Gastrocnemius medialis (tissue), 4 donors: ENCODE measurements at regions of chr11 and their contacts with region 1.

Region 1: DNA sequence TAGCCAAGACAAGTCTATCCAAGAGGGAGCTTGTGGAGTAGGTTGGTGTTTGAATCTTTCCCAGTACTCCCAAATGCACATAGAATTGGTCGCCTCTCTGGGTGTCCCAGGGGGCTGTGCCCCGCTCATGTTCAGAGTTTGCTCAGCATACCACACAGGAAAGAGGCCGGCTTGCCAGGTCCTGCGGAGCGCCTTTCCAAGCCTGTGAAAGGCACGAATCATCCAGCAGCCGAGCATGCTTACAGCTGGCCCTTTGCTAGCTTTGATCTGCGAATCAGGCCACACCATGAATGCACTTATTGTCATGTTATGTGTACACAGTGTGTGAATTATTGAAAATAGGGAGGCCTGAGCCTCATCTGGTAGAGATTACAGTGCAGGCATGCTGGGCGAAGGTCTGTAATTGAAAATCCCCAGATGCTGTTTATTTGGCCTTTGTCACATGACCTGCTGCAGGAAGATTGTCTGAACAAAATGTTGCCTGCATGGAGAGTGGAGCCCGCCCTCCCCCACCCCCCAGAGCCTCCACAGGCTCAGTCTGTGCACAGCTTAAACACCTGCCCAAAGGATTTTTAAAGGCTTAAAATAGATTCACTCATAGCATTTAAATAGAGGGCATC is 163.3 kb upstream of the RASSF10 start:
- DNase-seq: peak in 1 of 2 donors; percentile 31
- ATAC-seq: peak; percentile 79 to 80
- H3K4me3 ChIP-seq: peak overlapping the region; percentile 8 to 22 (median 14)
- H3K27ac ChIP-seq: peak overlapping the region; percentile 77 to 93 (median 85)
- H3K4me1 ChIP-seq: peaks cover 75 to 91% of the 10 kb centered on the region in 2 donors
- H3K27me3 ChIP-seq: no peaks in the 10 kb centered on the region
- CTCF ChIP-seq: no peak
- POLR2A ChIP-seq: no peak

Region 2: DNA sequence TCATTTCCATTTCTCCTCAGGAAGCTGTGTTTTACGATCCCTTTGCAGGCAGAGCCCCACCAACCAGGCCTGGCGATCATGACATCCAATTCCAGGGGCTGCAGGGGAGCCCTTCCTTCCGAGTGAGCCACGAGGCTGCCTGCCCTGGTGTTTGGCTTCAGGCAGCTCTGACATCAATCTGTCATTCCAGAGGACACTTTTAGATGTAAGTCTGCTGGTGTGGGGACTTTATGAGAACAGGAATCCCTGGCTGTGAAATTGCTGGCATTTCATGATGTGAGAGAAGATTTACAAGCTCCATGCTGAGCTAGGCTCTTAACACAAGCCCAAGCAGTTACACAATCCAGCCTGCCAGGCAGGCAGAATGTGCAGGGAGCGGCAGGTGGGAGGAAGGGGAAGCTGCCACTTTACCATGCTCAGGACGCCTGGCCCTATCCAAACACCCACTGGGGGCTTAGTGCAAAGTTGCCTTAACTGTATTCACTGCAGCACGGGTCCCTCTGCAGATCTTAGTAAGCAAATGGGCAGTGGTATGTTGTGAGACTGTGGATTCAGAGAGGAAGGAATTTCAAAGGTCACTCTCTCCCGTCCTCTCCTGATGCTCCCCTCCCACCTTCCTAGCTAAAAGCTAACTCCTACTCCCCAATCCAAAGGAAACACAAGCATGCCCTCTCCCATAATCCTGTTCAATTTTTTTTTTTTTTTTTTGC is 778.9 kb before region 1 on chr11:
- in situ Hi-C with region 1: no loop called
- intact Hi-C with region 1: loop called (anchors 5 kb)
- DNase-seq: peak; percentile 80 to 90
- ATAC-seq: peak; percentile 74 to 79
- H3K4me3 ChIP-seq: no peak overlapping the region
- H3K27ac ChIP-seq: peak overlapping the region; percentile 84 to 89 (median 86)
- H3K4me1 ChIP-seq: peaks cover 44 to 45% of the 10 kb centered on the region in 2 donors
- H3K27me3 ChIP-seq: no peaks in the 10 kb centered on the region
- CTCF ChIP-seq: no peak
- POLR2A ChIP-seq: peak; percentile 55 to 73

Region 3: GRCh38 chr11:12914400-12914912 is 68.6 kb after region 1 on chr11:
- in situ Hi-C with region 1: no loop called
- intact Hi-C with region 1: loop called (anchors 2 kb)
- DNase-seq: peak; percentile 77 to 94
- ATAC-seq: peak; percentile 90 to 96
- H3K4me3 ChIP-seq: no peak overlapping the region
- H3K27ac ChIP-seq: peak overlapping the region; percentile 79 to 84 (median 82)
- H3K4me1 ChIP-seq: peaks cover 24 to 26% of the 10 kb centered on the region in 2 donors
- H3K27me3 ChIP-seq: no peaks in the 10 kb centered on the region
- CTCF ChIP-seq: peak; percentile 60 to 83 (median 71)
- POLR2A ChIP-seq: no peak

Region 4: GRCh38 chr11:13216019-13216710 is 370.3 kb after region 1 on chr11:
- in situ Hi-C with region 1: no loop called
- intact Hi-C with region 1: no loop called
- DNase-seq: no peak
- ATAC-seq: no peak
- H3K4me3 ChIP-seq: no peak overlapping the region
- H3K27ac ChIP-seq: no peak overlapping the region
- H3K4me1 ChIP-seq: no peaks in the 10 kb centered on the region
- H3K27me3 ChIP-seq: no peaks in the 10 kb centered on the region
- CTCF ChIP-seq: no peak
- POLR2A ChIP-seq: no peak